ENCODE measurements at regions of chr3 and their contacts with region 1.

Region 1: GRCh38 chr3:2506776-2507175 is 408.1 kb downstream of the CNTN4 start:
- DNase-seq: no peak
- ATAC-seq: no peak
- H3K4me3 ChIP-seq: no peak overlapping the region
- H3K27ac ChIP-seq: no peak overlapping the region
- H3K4me1 ChIP-seq: no peaks in the 10 kb centered on the region
- H3K27me3 ChIP-seq: no peaks in the 10 kb centered on the region
- CTCF ChIP-seq: no peak

Region 2: GRCh38 chr3:992871-993270 is 1513.9 kb before region 1 on chr3:
- CTCF ChIA-PET with region 1: no interaction called
- POLR2A ChIA-PET with region 1: no interaction called
- in situ Hi-C with region 1: no loop called
- intact Hi-C with region 1: loop called (anchors 10 kb)
- DNase-seq: no peak
- ATAC-seq: no peak
- H3K4me3 ChIP-seq: no peak overlapping the region
- H3K27ac ChIP-seq: no peak overlapping the region
- H3K4me1 ChIP-seq: no peaks in the 10 kb centered on the region
- H3K27me3 ChIP-seq: no peaks in the 10 kb centered on the region
- CTCF ChIP-seq: no peak

Region 3: DNA sequence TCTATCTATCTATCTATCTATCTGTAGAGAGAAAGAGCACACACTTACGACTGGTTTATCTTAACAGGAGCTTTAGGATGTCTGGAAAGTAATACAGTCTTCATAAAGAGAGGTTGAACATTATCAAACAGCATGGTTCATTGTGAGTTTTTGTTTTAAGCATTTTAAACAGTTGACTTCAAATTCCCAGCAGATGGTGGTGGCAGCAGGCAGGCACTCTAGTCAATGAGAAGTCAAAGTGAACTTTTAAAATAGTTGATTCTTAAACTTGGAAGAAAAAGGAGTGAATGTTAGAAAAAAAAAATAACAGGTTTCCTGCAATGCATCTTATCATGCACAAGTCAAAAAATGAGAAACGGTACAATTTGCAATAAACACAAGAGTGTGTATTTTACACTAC is 170.7 kb after region 1 on chr3:
- CTCF ChIA-PET with region 1: no interaction called
- POLR2A ChIA-PET with region 1: no interaction called
- in situ Hi-C with region 1: no loop called
- intact Hi-C with region 1: no loop called
- DNase-seq: no peak
- ATAC-seq: no peak
- H3K4me3 ChIP-seq: no peak overlapping the region
- H3K27ac ChIP-seq: no peak overlapping the region
- H3K4me1 ChIP-seq: no peaks in the 10 kb centered on the region
- H3K27me3 ChIP-seq: no peaks in the 10 kb centered on the region
- CTCF ChIP-seq: no peak

Measured in Panc1 (cell line).